A549 (cell line): ENCODE measurements at regions of chr1 and their contacts with region 1.

Region 1: GRCh38 chr1:155091071-155091709 is 12.6 kb downstream of the EFNA3 start:
- DNase-seq: peak; percentile 73 to 75
- ATAC-seq: peak; percentile 64 to 85
- H3K4me3 ChIP-seq: no peak overlapping the region
- H3K27ac ChIP-seq: peak overlapping the region; percentile 45 to 79; a peak in 5 of 6 replicates
- H3K4me1 ChIP-seq: peaks cover 16% of the 10 kb centered on the region
- CTCF ChIP-seq: peak; percentile 91
- EP300 ChIP-seq: no peak
- POLR2A ChIP-seq: no peak
- RAD21 ChIP-seq: peak; percentile 74 to 76

Region 2: DNA sequence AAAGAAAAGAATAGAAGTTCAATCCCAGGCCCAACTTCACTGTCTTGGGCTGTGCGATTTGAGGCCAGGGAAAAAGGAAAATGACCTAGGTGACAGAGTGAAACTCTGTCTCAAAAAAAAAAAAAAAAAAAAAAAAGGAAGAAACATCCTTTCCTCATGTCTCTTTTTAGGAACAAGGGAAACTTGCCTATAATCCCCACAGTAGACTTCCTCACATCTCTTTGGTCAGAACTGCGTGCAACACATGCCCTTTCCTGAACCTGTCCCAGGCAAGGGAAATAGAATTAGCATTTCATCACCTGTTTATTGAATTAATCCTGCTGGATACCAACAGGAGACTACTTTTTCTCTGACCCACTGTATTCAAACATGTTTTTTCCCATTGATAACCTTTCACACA is 55.3 kb before region 1 on chr1:
- CTCF ChIA-PET with region 1: no interaction called
- POLR2A ChIA-PET with region 1: no interaction called
- DNase-seq: no peak
- ATAC-seq: no peak
- H3K4me3 ChIP-seq: no peak overlapping the region
- H3K27ac ChIP-seq: peak overlapping the region in 1 of 2 experiments; percentile 62; a peak in 1 of 6 replicates
- H3K4me1 ChIP-seq: peaks cover 20% of the 10 kb centered on the region
- CTCF ChIP-seq: no peak
- EP300 ChIP-seq: no peak
- POLR2A ChIP-seq: no peak
- RAD21 ChIP-seq: no peak

Region 3: DNA sequence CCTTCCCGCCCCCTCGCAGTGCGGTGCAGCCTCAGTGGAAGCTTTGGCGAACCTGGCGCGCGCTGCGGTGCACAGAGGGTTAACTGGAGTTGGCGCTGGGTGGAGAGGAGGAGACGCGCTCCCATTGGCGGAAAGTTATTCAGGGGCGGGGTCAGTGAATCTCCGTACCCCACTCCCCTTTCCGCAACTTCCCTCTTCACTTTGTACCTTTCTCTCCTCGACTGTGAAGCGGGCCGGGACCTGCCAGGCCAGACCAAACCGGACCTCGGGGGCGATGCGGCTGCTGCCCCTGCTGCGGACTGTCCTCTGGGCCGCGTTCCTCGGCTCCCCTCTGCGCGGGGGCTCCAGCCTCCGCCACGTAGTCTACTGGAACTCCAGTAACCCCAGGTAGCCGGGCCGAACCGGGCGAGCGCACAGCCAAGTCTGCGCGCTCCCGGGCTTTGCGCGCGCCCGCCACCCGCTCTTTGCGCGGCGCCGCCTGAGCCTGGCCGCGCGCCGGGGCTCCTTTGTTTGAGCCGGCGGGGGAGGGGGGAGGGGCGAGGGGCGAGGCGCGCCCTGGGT is 27.6 kb before region 1 on chr1 and contains the start of gene EFNA4:
- CTCF ChIA-PET with region 1: interaction called, 350 read pairs
- POLR2A ChIA-PET with region 1: no interaction called
- DNase-seq: peak; percentile 89 to 91
- ATAC-seq: peak; percentile 72 to 86
- H3K4me3 ChIP-seq: peak within 1 kb of the TSS; percentile 77
- H3K27ac ChIP-seq: peak within 1 kb of the TSS; percentile 81 to 91
- H3K4me1 ChIP-seq: peaks cover 23% of the 10 kb centered on the region
- CTCF ChIP-seq: no peak
- EP300 ChIP-seq: no peak
- POLR2A ChIP-seq: peak; percentile 77
- RAD21 ChIP-seq: no peak
- polyA plus RNA-seq, gene EFNA4: 3.1 and 4.9 TPM in 2 replicates

Region 4: DNA sequence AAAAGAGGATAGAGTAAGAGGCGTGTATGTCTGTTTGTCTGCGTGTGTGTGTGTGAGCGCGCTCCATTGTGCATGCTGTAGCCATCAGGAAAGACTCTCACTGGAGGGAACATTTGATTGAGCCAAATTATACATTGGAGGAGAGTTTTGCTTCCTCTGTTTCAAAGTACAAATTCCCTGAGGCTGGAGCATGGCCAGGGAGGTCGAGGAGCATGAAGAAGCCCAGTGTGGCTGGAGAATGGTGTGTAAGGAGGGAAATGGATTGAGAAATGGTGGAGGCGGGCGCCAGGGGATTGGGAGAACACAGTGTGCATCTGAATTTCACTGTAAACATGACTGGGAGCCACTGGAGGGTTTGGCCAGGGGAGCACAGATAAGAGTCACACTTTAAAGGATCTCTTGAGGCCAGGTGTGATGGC is 14.4 kb after region 1 on chr1:
- CTCF ChIA-PET with region 1: interaction called, 67 read pairs
- POLR2A ChIA-PET with region 1: no interaction called
- DNase-seq: no peak
- ATAC-seq: no peak
- H3K4me3 ChIP-seq: no peak overlapping the region
- H3K27ac ChIP-seq: no peak overlapping the region
- H3K4me1 ChIP-seq: no peaks in the 10 kb centered on the region
- CTCF ChIP-seq: no peak
- EP300 ChIP-seq: no peak
- POLR2A ChIP-seq: no peak
- RAD21 ChIP-seq: no peak

Region 5: GRCh38 chr1:155135415-155136028 is 44.3 kb after region 1 on chr1 and contains the start of gene SLC50A1:
- CTCF ChIA-PET with region 1: interaction called, 309 read pairs
- POLR2A ChIA-PET with region 1: no interaction called
- DNase-seq: peak; percentile 91 to 93
- ATAC-seq: peak; percentile 76 to 88
- H3K4me3 ChIP-seq: peak within 1 kb of the TSS; percentile 60
- H3K27ac ChIP-seq: peak within 1 kb of the TSS; percentile 90 to 92
- H3K4me1 ChIP-seq: peaks cover 34% of the 10 kb centered on the region
- CTCF ChIP-seq: no peak
- EP300 ChIP-seq: no peak
- POLR2A ChIP-seq: peak; percentile 77
- RAD21 ChIP-seq: no peak
- polyA plus RNA-seq, gene SLC50A1: 39.3 and 39.4 TPM in 2 replicates

Region 6: GRCh38 chr1:155158979-155159378 is 67.8 kb after region 1 on chr1:
- CTCF ChIA-PET with region 1: interaction called, 23 read pairs
- POLR2A ChIA-PET with region 1: no interaction called
- DNase-seq: no peak
- ATAC-seq: no peak
- H3K4me3 ChIP-seq: no peak overlapping the region
- H3K27ac ChIP-seq: no peak overlapping the region
- H3K4me1 ChIP-seq: no peaks in the 10 kb centered on the region
- CTCF ChIP-seq: no peak
- EP300 ChIP-seq: no peak
- POLR2A ChIP-seq: no peak
- RAD21 ChIP-seq: no peak